Left lung (tissue), 14 donors: ENCODE measurements at regions of chr1 and their contacts with region 1.

Region 1: GRCh38 chr1:169288011-169288414 is 79.6 kb downstream of the NME7 start:
- DNase-seq: no peak
- ATAC-seq: peak; percentile 62
- H3K4me3 ChIP-seq: no peak overlapping the region
- H3K27ac ChIP-seq: no peak overlapping the region
- H3K4me1 ChIP-seq: no peaks in the 10 kb centered on the region
- H3K27me3 ChIP-seq: no peaks in the 10 kb centered on the region
- CTCF ChIP-seq: no peak

Region 2: DNA sequence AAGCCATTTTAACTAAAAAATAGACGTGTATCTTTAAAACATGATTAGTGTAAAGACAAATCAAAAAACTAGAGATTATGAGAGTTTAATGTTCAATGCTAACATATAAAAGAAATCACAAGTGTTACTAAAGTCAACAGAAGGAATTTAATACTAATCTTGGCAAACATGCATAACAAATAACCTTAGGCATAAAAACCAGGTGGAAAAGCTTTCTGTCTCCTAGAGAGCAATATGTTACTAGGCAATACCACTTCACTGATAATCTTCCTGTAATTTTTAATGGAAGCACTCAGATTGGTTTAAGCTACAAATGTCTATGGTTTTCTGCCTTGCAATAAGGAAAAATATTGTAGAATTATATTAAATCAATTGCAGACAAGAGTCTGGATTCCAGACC is 42.3 kb before region 1 on chr1:
- intact Hi-C with region 1: loop called in 1 of 2 experiments (anchors 5 kb)
- DNase-seq: peak in 1 of 4 donors; percentile 7
- ATAC-seq: peak; percentile 27
- H3K4me3 ChIP-seq: no peak overlapping the region
- H3K27ac ChIP-seq: no peak overlapping the region
- H3K4me1 ChIP-seq: no peaks in the 10 kb centered on the region
- H3K27me3 ChIP-seq: no peaks in the 10 kb centered on the region
- CTCF ChIP-seq: no peak